Colonic mucosa (tissue), 4 donors: ENCODE measurements at regions of chr2 and their contacts with region 1.

Region 1: GRCh38 chr2:66429071-66429477 is 5.9 kb upstream of the MEIS1 start:
- DNase-seq: no peak
- H3K4me3 ChIP-seq: no peak overlapping the region
- H3K27ac ChIP-seq: no peak overlapping the region
- H3K4me1 ChIP-seq: no peaks in the 10 kb centered on the region
- H3K27me3 ChIP-seq: peaks cover 37% of the 10 kb centered on the region
- CTCF ChIP-seq: peak; percentile 73

Region 2: GRCh38 chr2:66389651-66390131 is 39.4 kb before region 1 on chr2:
- intact Hi-C with region 1: no loop called
- DNase-seq: peak; percentile 17
- H3K4me3 ChIP-seq: no peak overlapping the region
- H3K27ac ChIP-seq: no peak overlapping the region
- H3K4me1 ChIP-seq: no peaks in the 10 kb centered on the region
- H3K27me3 ChIP-seq: no peaks in the 10 kb centered on the region
- CTCF ChIP-seq: no peak

Region 3: DNA sequence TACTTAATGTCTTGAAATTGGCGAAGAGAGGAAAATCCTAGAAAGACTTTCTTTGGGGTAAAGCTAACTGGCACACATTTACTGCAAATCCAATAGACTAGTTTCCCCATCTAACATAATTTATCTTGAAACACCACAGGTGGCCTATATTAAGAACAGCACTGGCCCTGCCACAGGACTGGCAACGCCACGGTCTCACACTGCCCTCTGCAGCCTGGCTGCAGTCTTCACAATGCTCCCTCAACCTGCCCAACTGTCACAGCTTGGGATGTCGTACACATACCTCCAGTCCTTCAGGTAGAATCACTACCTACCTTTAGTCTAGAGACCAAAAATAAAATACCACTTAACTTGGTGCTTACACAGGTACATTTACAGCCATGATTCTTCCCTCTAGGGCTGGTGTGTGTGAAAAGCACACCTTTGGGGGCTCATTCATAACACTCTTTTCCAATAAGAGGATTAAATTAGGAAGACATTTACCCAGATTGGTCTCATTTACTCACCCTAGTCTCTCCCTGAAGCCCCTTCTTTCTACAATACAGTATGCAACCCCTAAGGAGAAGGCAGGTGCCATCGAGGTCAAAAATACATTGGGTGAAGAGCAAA is 1411.5 kb after region 1 on chr2:
- intact Hi-C with region 1: loop called (anchors 10 kb)
- DNase-seq: peak; percentile 58
- H3K4me3 ChIP-seq: no peak overlapping the region
- H3K27ac ChIP-seq: no peak overlapping the region
- H3K4me1 ChIP-seq: no peaks in the 10 kb centered on the region
- H3K27me3 ChIP-seq: no peaks in the 10 kb centered on the region
- CTCF ChIP-seq: peak; percentile 72